ENCODE measurements at regions of chr17 and their contacts with region 1.

Region 1: GRCh38 chr17:50114849-50115357 is 15.1 kb downstream of the SAMD14 start:
- H3K4me3 ChIP-seq: no peak overlapping the region
- H3K27ac ChIP-seq: no peak overlapping the region
- H3K4me1 ChIP-seq: no peaks in the 10 kb centered on the region; the same call in 1 of the 2 replicates
- CTCF ChIP-seq: peak; percentile 58

Region 2: DNA sequence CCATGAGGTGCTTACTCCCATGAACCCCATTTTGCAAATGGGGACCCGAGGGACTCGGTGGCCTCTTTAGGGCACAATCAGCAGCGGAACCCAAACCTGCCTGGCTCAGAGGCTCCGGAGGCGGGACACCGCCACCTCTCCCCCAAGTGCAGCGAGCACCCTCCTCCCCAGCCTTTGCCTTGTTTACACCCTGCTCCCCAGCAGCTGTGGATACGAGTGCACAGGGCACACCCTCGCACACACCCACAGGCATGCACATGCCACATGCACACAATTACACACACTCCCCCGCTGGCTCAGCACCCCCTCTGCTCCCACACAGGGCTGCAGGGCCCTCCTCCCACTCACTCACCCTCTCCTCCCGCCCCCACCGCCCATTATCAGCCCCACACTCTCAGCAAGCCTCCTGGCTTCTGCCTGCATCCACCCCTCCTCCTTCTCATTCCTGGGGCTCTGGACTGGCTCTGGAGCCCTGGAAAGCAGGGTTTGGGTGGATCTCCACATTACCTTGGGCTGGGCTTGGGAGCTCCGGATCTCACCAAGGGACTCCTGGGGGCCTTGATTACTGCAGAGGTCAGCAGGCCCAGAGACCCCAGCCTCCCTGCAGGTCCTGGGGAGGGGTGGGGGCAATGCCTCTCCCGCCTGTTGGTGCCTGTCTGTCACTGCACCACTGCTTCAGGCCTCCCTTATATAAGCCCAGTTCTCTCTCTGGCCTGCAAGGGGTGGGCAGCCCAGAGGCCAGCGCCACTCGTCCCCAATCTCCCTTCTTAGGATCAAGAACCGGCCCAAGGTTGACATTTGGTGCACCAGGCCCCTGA is 13.3 kb before region 1 on chr17:
- CTCF ChIA-PET with region 1: interaction called, 21 read pairs
- POLR2A ChIA-PET with region 1: interaction called, 4 read pairs
- H3K4me3 ChIP-seq: no peak overlapping the region
- H3K27ac ChIP-seq: no peak overlapping the region
- H3K4me1 ChIP-seq: peaks cover 7% of the 10 kb centered on the region
- CTCF ChIP-seq: no peak

Region 3: GRCh38 chr17:50129728-50130558 is 15.0 kb after region 1 on chr17 and contains the start of gene SAMD14:
- CTCF ChIA-PET with region 1: interaction called, 28 read pairs
- POLR2A ChIA-PET with region 1: interaction called, 9 read pairs
- H3K4me3 ChIP-seq: peak within 1 kb of the TSS; percentile 35
- H3K27ac ChIP-seq: no peak within 1 kb of the TSS
- H3K4me1 ChIP-seq: no peaks in the 10 kb centered on the region
- CTCF ChIP-seq: no peak